ENCODE measurements at regions of chr2 and their contacts with region 1.

Region 1: DNA sequence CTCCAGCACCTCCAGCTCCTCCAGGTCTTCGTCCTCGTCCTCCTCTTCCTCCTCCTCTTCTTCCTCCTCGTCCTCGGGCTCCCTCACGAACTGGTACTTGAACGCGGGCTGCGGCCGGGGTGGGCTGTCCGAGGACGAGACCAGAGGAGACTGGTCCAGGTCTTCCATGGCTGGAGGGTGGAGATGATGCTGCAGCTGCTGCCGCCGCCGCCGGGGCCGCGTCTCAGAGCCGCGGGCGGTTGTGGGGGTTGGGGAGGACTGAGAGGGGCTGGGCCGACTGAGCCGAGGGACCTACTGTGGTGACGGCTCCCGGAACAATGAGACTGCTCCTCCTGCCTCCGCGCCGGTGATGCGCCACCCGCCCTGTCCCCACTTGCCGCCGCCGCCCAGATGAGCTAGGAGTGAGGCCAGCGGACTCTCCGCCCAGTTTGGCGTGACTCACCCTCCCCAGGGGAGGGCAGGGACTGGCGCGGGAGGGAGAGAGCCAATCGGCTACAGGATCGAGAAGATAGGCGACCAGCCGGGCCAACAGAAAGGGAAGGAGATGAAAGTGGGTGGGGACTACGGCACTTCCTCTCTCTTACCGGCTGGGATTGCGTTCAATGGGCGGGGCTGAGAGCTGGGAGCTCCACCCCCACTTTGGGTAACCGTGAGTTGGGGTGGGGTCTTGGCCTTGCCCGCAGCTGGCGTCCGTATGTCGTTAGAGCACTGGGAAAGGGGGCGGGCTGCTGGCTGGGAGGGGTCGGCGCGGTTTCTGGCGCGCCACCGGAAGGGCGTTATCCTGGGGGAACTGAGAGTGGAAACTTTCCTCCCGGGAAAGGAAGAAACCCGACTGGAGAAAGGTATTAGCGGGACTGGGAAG is at the start of gene RTN4:
- DNase-seq: peak; percentile 99
- H3K4me3 Mint-ChIP-seq: peak within 1 kb of the TSS; percentile 96
- H3K27ac Mint-ChIP-seq: peak within 1 kb of the TSS; percentile 98
- H3K4me1 Mint-ChIP-seq: peaks cover 58% of the 10 kb centered on the region
- H3K27me3 Mint-ChIP-seq: no peaks in the 10 kb centered on the region
- total RNA-seq, gene RTN4: 96.7 to 97.5 TPM

Region 2: GRCh38 chr2:54558188-54559005 is 492.0 kb before region 1 on chr2:
- CTCF ChIA-PET with region 1: no interaction called
- POLR2A ChIA-PET with region 1: no interaction called
- intact Hi-C with region 1: loop called (anchors 2 kb)
- DNase-seq: peak; percentile 85
- H3K4me3 Mint-ChIP-seq: peak overlapping the region; percentile 83
- H3K27ac Mint-ChIP-seq: peak overlapping the region; percentile 89
- H3K4me1 Mint-ChIP-seq: peaks cover 42% of the 10 kb centered on the region
- H3K27me3 Mint-ChIP-seq: no peaks in the 10 kb centered on the region

Region 3: GRCh38 chr2:55014962-55015939 is 35.1 kb before region 1 on chr2:
- CTCF ChIA-PET with region 1: interaction called, 8 read pairs
- POLR2A ChIA-PET with region 1: no interaction called
- intact Hi-C with region 1: loop called (anchors 2 kb)
- DNase-seq: peak; percentile 44
- H3K4me3 Mint-ChIP-seq: no peak overlapping the region
- H3K27ac Mint-ChIP-seq: no peak overlapping the region
- H3K4me1 Mint-ChIP-seq: peaks cover 40% of the 10 kb centered on the region
- H3K27me3 Mint-ChIP-seq: no peaks in the 10 kb centered on the region

Region 4: DNA sequence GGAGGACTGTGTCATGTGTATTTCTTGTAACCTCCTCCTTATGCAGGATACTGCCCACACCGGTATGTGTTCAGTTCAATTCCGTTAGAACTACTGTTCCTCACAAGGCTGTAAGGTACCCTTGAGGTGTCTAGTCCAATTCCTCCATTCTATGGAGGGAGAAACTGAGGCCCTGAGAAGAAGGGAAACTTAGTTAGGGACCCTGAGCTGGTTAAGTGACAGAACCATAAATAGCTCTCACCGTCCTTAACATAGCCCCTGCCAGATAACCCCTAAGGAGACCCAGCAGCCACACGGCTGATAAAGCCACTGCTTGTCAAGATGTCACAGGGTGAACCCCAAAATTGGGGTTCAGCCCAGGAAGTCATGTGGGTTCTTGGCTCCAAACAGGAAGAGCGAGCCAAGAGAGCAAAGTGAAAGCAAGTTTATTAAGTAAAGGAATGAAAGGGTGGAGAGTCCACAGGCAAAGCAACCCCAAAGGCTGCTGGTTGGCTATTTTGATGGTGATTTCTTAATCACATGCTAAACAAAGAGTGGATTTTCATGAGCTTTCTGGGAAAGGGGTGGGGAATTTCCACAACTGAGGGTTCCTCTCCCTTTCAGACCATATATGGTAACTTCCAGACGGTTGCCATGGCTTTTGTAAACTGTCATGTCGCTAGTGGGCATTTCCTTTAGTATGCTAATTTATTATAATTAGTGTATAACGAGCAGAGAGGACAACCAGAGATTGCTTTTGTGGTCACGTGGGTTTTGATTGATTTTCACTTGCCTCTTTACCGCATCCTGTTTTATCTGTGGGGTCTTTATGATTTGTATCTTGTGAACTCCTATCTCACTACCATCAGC is 83.3 kb after region 1 on chr2:
- CTCF ChIA-PET with region 1: interaction called, 5 read pairs
- POLR2A ChIA-PET with region 1: interaction called, 10 read pairs
- intact Hi-C with region 1: loop called (anchors 1 kb)
- DNase-seq: peak; percentile 63
- H3K4me3 Mint-ChIP-seq: peak overlapping the region; percentile 69
- H3K27ac Mint-ChIP-seq: peak overlapping the region; percentile 96
- H3K4me1 Mint-ChIP-seq: peaks cover 17% of the 10 kb centered on the region
- H3K27me3 Mint-ChIP-seq: no peaks in the 10 kb centered on the region

Region 5: GRCh38 chr2:55311444-55311870 is 261.1 kb after region 1 on chr2:
- CTCF ChIA-PET with region 1: interaction called, 3 read pairs
- POLR2A ChIA-PET with region 1: no interaction called
- intact Hi-C with region 1: loop called (anchors 5 kb)
- DNase-seq: peak; percentile 65
- H3K4me3 Mint-ChIP-seq: no peak overlapping the region
- H3K27ac Mint-ChIP-seq: no peak overlapping the region
- H3K4me1 Mint-ChIP-seq: peaks cover 22% of the 10 kb centered on the region
- H3K27me3 Mint-ChIP-seq: no peaks in the 10 kb centered on the region

Region 6: GRCh38 chr2:55693181-55694134 is 643.1 kb after region 1 on chr2 and contains the start of gene PNPT1:
- CTCF ChIA-PET with region 1: no interaction called
- POLR2A ChIA-PET with region 1: no interaction called
- intact Hi-C with region 1: loop called (anchors 10 kb)
- DNase-seq: peak; percentile 97
- H3K4me3 Mint-ChIP-seq: peak within 1 kb of the TSS; percentile 98
- H3K27ac Mint-ChIP-seq: peak within 1 kb of the TSS; percentile 90
- H3K4me1 Mint-ChIP-seq: peaks cover 35% of the 10 kb centered on the region
- H3K27me3 Mint-ChIP-seq: no peaks in the 10 kb centered on the region
- total RNA-seq, gene PNPT1: 44.0 to 48.4 TPM

Measured in activated CD4-positive, alpha-beta memory T cell treated with anti-CD3 and anti-CD28 coated beads for 36 hours (primary cell).